CD8-positive, alpha-beta T cell (primary cell): ENCODE measurements at regions of chr10 and their contacts with region 1.

Region 1: DNA sequence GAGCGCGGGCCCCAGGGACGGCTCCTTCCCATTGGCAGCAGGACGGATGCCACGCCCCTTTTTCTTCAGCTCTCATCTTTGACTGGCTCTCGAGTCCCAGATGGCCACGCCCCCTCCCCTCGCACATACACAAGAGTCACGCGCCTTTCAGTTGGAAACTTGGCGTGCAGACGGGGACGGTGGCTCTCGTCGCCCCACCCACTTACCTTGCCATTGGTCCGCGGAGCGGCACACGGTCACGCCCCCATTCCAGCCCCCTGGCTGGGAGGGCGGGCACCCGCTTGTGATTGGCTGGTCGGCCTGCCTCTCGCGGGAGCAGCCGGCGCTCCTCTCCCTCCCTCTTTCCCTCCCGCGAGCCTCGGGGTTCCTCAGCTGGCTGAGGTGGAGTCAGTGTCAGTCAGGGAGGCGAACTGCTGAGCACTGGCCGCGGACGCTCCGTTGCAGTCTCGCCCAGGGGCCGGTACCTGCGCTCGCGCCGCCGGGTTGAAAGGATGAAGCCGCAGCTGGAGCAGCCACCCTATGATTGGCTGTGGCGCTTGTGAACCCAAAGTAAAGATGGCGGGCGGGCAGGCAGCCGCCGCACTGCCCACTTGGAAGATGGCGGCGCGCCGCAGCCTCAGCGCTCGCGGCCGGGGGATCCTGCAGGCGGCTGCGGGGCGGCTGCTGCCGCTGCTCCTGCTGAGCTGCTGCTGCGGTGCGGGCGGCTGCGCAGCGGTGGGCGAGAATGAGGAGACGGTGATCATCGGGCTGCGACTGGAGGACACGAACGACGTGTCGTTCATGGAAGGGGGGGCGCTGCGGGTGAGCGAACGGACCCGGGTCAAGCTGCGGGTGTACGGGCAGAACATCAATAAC is at the start of gene CNNM2:
- DNase-seq: peak; percentile 99 to 100 (median 100)
- ATAC-seq: peak; percentile 89
- H3K4me3 ChIP-seq: peak within 1 kb of the TSS; percentile 95 to 99
- H3K4me3 Mint-ChIP-seq: peak within 1 kb of the TSS; percentile 96
- H3K27ac ChIP-seq: peak within 1 kb of the TSS; percentile 84 to 94
- H3K27ac Mint-ChIP-seq: peak within 1 kb of the TSS; percentile 95
- H3K4me1 ChIP-seq: peaks cover 44% of the 10 kb centered on the region
- H3K4me1 Mint-ChIP-seq: peaks cover 55% of the 10 kb centered on the region
- H3K27me3 ChIP-seq: peaks cover 0 to 2% of the 10 kb centered on the region in 2 experiments
- H3K27me3 Mint-ChIP-seq: peaks cover 9% of the 10 kb centered on the region
- CTCF ChIP-seq: no peak
- total RNA-seq, gene CNNM2: 9.5 to 9.6 TPM

Region 2: GRCh38 chr10:102132563-102133372 is 785.4 kb before region 1 on chr10 and contains the start of gene PPRC1:
- CTCF ChIA-PET with region 1: no interaction called
- POLR2A ChIA-PET with region 1: no interaction called
- intact Hi-C with region 1: loop called in 1 of 2 experiments (anchors 2 kb)
- DNase-seq: peak; percentile 91 to 99 (median 96)
- ATAC-seq: peak; percentile 93
- H3K4me3 ChIP-seq: peak within 1 kb of the TSS; percentile 79 to 96
- H3K4me3 Mint-ChIP-seq: peak within 1 kb of the TSS; percentile 96
- H3K27ac ChIP-seq: peak within 1 kb of the TSS; percentile 75 to 92
- H3K27ac Mint-ChIP-seq: peak within 1 kb of the TSS; percentile 95
- H3K4me1 ChIP-seq: peaks cover 26% of the 10 kb centered on the region
- H3K4me1 Mint-ChIP-seq: peaks cover 40% of the 10 kb centered on the region
- H3K27me3 ChIP-seq: no peaks in the 10 kb centered on the region
- H3K27me3 Mint-ChIP-seq: no peaks in the 10 kb centered on the region
- CTCF ChIP-seq: peak; percentile 96
- total RNA-seq, gene PPRC1: 35.2 to 38.5 TPM

Region 3: GRCh38 chr10:102743588-102744373 is 174.4 kb before region 1 on chr10 and contains the start of gene WBP1L:
- CTCF ChIA-PET with region 1: interaction called, 5 read pairs
- POLR2A ChIA-PET with region 1: interaction called, 3 read pairs
- intact Hi-C with region 1: loop called in 1 of 2 experiments (anchors 2 kb)
- DNase-seq: peak; percentile 90 to 99 (median 95)
- ATAC-seq: peak; percentile 96
- H3K4me3 ChIP-seq: peak within 1 kb of the TSS; percentile 87 to 99
- H3K4me3 Mint-ChIP-seq: peak within 1 kb of the TSS; percentile 92
- H3K27ac ChIP-seq: peak within 1 kb of the TSS; percentile 64 to 91
- H3K27ac Mint-ChIP-seq: peak within 1 kb of the TSS; percentile 90
- H3K4me1 ChIP-seq: peaks cover 34% of the 10 kb centered on the region
- H3K4me1 Mint-ChIP-seq: peaks cover 50% of the 10 kb centered on the region
- H3K27me3 ChIP-seq: no peaks in the 10 kb centered on the region
- H3K27me3 Mint-ChIP-seq: no peaks in the 10 kb centered on the region
- CTCF ChIP-seq: no peak
- total RNA-seq, gene WBP1L: 5.5 to 5.9 TPM

Region 4: GRCh38 chr10:103053659-103054581 is 135.7 kb after region 1 on chr10:
- CTCF ChIA-PET with region 1: interaction called, 9 read pairs
- POLR2A ChIA-PET with region 1: interaction called, 7 read pairs
- intact Hi-C with region 1: loop called in 1 of 2 experiments (anchors 1 kb)
- DNase-seq: peak; percentile 20 to 91 (median 56)
- ATAC-seq: peak; percentile 93
- H3K4me3 ChIP-seq: peak overlapping the region; percentile 46 to 59
- H3K4me3 Mint-ChIP-seq: peak overlapping the region; percentile 89
- H3K27ac ChIP-seq: peak overlapping the region; percentile 63 to 73
- H3K27ac Mint-ChIP-seq: peak overlapping the region; percentile 88
- H3K4me1 ChIP-seq: peaks cover 21% of the 10 kb centered on the region
- H3K4me1 Mint-ChIP-seq: peaks cover 17% of the 10 kb centered on the region
- H3K27me3 ChIP-seq: no peaks in the 10 kb centered on the region
- H3K27me3 Mint-ChIP-seq: no peaks in the 10 kb centered on the region
- CTCF ChIP-seq: no peak

Region 5: DNA sequence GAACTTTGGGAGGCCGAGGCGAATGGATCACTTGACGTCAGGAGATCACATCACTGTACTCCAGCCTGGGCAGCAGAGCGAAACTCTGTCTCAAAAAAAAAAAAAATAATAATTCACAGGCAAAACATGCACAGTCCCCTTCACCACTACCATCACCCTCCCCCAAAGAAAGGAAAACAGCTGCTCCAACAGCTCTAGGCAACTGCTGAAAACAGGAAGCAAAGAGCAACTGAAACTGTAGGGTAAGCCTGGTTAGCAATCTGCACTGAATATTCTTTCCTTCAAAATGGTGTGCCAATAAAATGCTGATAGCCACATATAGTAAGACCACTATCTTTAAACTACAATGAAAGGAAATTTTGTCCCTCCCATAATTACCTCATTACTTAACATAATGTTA is 263.1 kb after region 1 on chr10:
- CTCF ChIA-PET with region 1: no interaction called
- POLR2A ChIA-PET with region 1: no interaction called
- intact Hi-C with region 1: no loop called
- DNase-seq: peak in 1 of 9 experiments; percentile 30
- ATAC-seq: no peak
- H3K4me3 ChIP-seq: no peak overlapping the region
- H3K4me3 Mint-ChIP-seq: no peak overlapping the region
- H3K27ac ChIP-seq: no peak overlapping the region
- H3K27ac Mint-ChIP-seq: no peak overlapping the region
- H3K4me1 ChIP-seq: peaks cover 18% of the 10 kb centered on the region
- H3K4me1 Mint-ChIP-seq: peaks cover 53% of the 10 kb centered on the region
- H3K27me3 ChIP-seq: no peaks in the 10 kb centered on the region
- H3K27me3 Mint-ChIP-seq: no peaks in the 10 kb centered on the region
- CTCF ChIP-seq: no peak

Region 6: GRCh38 chr10:103192451-103193106 is 274.4 kb after region 1 on chr10:
- CTCF ChIA-PET with region 1: interaction called, 9 read pairs
- POLR2A ChIA-PET with region 1: interaction called, 5 read pairs
- intact Hi-C with region 1: loop called (anchors 1 to 2 kb)
- DNase-seq: peak; percentile 19 to 74 (median 51)
- ATAC-seq: peak; percentile 64
- H3K4me3 ChIP-seq: peak overlapping the region; percentile 68 to 85
- H3K4me3 Mint-ChIP-seq: peak overlapping the region; percentile 97
- H3K27ac ChIP-seq: peak overlapping the region; percentile 76 to 88
- H3K27ac Mint-ChIP-seq: peak overlapping the region; percentile 96
- H3K4me1 ChIP-seq: peaks cover 25% of the 10 kb centered on the region
- H3K4me1 Mint-ChIP-seq: peaks cover 41% of the 10 kb centered on the region
- H3K27me3 ChIP-seq: no peaks in the 10 kb centered on the region
- H3K27me3 Mint-ChIP-seq: no peaks in the 10 kb centered on the region
- CTCF ChIP-seq: no peak

Region 7: DNA sequence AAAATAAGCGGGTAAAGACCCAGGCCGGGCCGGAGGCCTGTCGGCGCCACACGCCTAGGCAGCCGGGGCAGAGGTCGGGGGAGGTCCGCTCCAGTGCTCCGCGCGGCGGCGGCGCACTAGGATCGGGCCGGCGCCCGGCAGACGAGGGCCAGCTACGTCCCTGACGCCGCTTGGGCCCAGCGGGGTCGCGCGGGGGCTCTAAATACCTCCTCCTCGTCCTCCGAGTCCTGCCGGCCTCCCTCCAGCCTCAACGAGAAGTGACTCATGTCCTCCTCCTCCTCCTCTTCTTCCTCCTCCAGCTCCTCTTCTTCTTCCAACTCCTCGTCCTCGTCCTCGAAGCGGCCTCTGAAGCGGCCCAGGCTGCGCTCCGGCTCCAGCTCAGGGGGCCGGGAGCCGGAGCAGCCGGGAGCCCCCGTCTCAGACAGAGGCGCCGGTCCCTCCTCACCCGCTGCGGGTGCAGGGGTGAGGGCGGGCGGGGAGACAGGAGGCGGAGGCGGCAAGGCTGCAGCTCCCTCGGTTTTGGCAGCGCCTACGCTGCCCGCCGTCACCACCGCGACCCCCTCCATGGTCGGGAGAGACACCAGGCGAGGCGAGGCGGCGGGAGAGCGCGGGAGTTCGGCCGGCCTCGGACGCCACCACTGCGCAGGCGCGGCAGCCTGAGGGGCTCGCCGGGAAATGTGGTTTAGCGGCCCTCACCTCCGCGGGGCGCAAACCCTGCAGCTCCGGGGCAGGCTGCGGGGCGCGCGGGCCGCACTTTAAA is 432.5 kb after region 1 on chr10 and contains the start of gene PCGF6:
- CTCF ChIA-PET with region 1: interaction called, 3 read pairs
- POLR2A ChIA-PET with region 1: no interaction called
- intact Hi-C with region 1: loop called in 1 of 2 experiments (anchors 5 kb)
- DNase-seq: peak; percentile 31 to 85 (median 70)
- ATAC-seq: peak; percentile 86
- H3K4me3 ChIP-seq: peak within 1 kb of the TSS; percentile 69 to 80
- H3K4me3 Mint-ChIP-seq: peak within 1 kb of the TSS; percentile 88
- H3K27ac ChIP-seq: peak within 1 kb of the TSS; percentile 34 to 46
- H3K27ac Mint-ChIP-seq: peak within 1 kb of the TSS; percentile 88
- H3K4me1 ChIP-seq: peaks cover 5% of the 10 kb centered on the region
- H3K4me1 Mint-ChIP-seq: peaks cover 14% of the 10 kb centered on the region
- H3K27me3 ChIP-seq: no peaks in the 10 kb centered on the region
- H3K27me3 Mint-ChIP-seq: no peaks in the 10 kb centered on the region
- CTCF ChIP-seq: no peak
- total RNA-seq, gene PCGF6: 1.7 to 2.1 TPM

Region 8: GRCh38 chr10:103481974-103482531 is 563.9 kb after region 1 on chr10:
- CTCF ChIA-PET with region 1: interaction called, 4 read pairs
- POLR2A ChIA-PET with region 1: no interaction called
- intact Hi-C with region 1: loop called (anchors 5 kb)
- DNase-seq: peak in 3 of 9 experiments; percentile 51 to 86 (median 80)
- ATAC-seq: peak; percentile 78
- H3K4me3 ChIP-seq: no peak overlapping the region
- H3K4me3 Mint-ChIP-seq: no peak overlapping the region
- H3K27ac ChIP-seq: no peak overlapping the region
- H3K27ac Mint-ChIP-seq: no peak overlapping the region
- H3K4me1 ChIP-seq: no peaks in the 10 kb centered on the region
- H3K4me1 Mint-ChIP-seq: peaks cover 6% of the 10 kb centered on the region
- H3K27me3 ChIP-seq: no peaks in the 10 kb centered on the region
- H3K27me3 Mint-ChIP-seq: peaks cover 3% of the 10 kb centered on the region
- CTCF ChIP-seq: peak; percentile 77